GM12878 (cell line): ENCODE measurements at regions of chr17 and their contacts with region 1.

Region 1: DNA sequence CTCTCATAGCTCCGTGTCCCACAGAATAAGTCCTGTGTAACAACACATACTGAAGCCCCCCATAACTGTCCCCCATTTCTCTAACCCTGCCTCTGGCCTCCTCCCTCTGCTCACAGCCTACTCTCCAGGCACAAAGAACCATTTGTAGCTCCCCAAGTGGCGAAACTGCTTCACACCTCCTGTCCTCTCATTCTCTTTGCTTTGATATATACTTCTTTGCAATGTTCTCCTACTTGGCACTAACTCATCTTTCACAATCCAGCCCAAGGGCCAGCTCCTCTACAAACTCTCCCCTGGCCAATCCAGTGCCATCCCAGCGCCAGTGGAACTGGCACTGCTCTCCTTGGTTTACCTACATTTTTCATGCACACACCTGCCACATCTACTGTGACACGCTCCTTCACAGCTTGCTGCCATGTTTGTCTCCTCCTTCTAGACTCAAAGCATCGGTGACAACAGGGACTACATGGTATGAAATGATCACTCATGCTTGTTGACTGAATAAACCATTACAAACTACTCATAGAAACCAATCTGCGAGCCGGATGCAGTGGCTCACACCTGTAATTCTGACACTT is 12.8 kb downstream of the CYTH1 start:
- DNase-seq: no peak
- ATAC-seq: peak; percentile 54
- H3K4me3 ChIP-seq: no peak overlapping the region
- H3K27ac ChIP-seq: peak overlapping the region; percentile 53
- H3K4me1 ChIP-seq: peaks cover 66% of the 10 kb centered on the region
- H3K27me3 ChIP-seq: no peaks in the 10 kb centered on the region
- CTCF ChIP-seq: peak; percentile 36 to 45 (median 45)
- EP300 ChIP-seq: no peak
- POLR2A ChIP-seq: peak; percentile 54; the same call in 1 of the 2 replicates
- RAD21 ChIP-seq: 0 out of 2 replicates have a peak, but pooled peaks have one; percentile 20

Region 2: GRCh38 chr17:78723001-78723796 is 46.1 kb before region 1 on chr17:
- CTCF ChIA-PET with region 1: interaction called, 7 read pairs
- POLR2A ChIA-PET with region 1: interaction called, 10 read pairs
- RAD21 ChIA-PET with region 1: interaction called, 5 read pairs
- SMC1A ChIA-PET with region 1: interaction called, 10 read pairs
- in situ Hi-C with region 1: no loop called
- intact Hi-C with region 1: no loop called
- DNase-seq: no peak
- ATAC-seq: no peak
- H3K4me3 ChIP-seq: peak overlapping the region; percentile 56
- H3K27ac ChIP-seq: peak overlapping the region; percentile 74
- H3K4me1 ChIP-seq: peaks cover 90% of the 10 kb centered on the region
- H3K27me3 ChIP-seq: no peaks in the 10 kb centered on the region
- CTCF ChIP-seq: no peak
- EP300 ChIP-seq: no peak
- POLR2A ChIP-seq: peak; percentile 30; the same call in 1 of the 2 replicates
- RAD21 ChIP-seq: no peak

Region 3: GRCh38 chr17:78729641-78730040 is 39.6 kb before region 1 on chr17:
- CTCF ChIA-PET with region 1: interaction called, 76 read pairs
- POLR2A ChIA-PET with region 1: interaction called, 131 read pairs
- RAD21 ChIA-PET with region 1: interaction called, 32 read pairs
- SMC1A ChIA-PET with region 1: interaction called, 10 read pairs
- in situ Hi-C with region 1: no loop called
- intact Hi-C with region 1: no loop called
- DNase-seq: no peak
- ATAC-seq: 0 out of 3 replicates have a peak, but pooled peaks have one; percentile 4
- H3K4me3 ChIP-seq: peak overlapping the region; percentile 67
- H3K27ac ChIP-seq: peak overlapping the region; percentile 74
- H3K4me1 ChIP-seq: peaks cover 55% of the 10 kb centered on the region
- H3K27me3 ChIP-seq: no peaks in the 10 kb centered on the region
- CTCF ChIP-seq: no peak
- EP300 ChIP-seq: no peak
- POLR2A ChIP-seq: no peak
- RAD21 ChIP-seq: no peak

Region 4: DNA sequence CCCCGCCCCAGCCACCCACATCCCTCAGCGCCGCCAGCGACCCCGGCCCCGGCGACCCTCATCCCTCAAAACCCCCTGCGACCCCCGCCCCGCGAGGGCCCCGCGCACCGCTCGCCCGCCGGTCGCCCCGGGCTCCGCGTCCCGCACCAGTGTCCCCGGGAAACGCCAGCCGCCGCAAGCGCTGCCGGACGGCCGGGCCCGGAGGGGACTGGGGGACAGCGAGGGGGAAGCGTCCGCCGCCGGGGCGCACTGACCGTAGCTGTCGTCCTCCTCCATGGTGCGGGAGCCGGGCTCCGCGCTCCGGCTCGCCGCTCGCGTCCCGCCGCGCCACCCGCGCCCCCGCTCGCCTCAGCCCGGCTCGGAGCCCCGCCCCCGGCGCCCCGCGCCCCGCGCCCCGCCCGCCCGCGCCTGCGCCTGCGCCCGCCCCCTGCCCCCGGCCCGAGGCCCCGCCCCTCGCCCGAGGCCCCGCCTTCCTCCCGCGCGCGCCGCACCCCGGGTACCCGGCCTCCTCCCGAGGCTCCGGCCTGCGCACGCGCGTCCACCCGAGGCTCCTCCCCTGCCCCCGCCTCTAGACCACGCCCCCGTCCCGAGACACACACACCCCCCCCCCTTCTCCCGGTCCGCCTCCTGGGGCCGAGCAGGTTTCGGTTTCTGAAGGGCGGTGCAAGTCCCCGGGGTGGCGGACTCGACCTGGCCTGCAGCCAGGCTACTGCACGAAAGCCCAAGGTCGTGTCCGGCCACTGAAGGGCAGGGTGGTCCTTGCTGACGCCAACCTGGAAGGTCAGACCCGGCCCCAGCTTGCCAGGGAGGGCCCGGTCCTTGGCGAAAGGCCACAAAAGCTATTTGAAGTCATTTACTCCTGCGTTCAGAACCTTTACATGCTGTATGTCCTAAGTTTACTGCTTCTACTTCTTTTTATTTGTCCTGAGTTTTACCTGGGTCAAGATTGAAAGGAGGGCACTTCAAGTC is 12.9 kb after region 1 on chr17 and contains the start of gene CYTH1:
- CTCF ChIA-PET with region 1: interaction called, 6 read pairs
- POLR2A ChIA-PET with region 1: interaction called, 10 read pairs
- RAD21 ChIA-PET with region 1: interaction called, 10 read pairs
- SMC1A ChIA-PET with region 1: interaction called, 5 read pairs
- in situ Hi-C with region 1: no loop called
- intact Hi-C with region 1: no loop called
- DNase-seq: no peak
- ATAC-seq: peak; percentile 54
- H3K4me3 ChIP-seq: peak within 1 kb of the TSS; percentile 89
- H3K27ac ChIP-seq: peak within 1 kb of the TSS; percentile 97
- H3K4me1 ChIP-seq: peaks cover 6% of the 10 kb centered on the region; the same call in 1 of the 2 replicates
- H3K27me3 ChIP-seq: no peaks in the 10 kb centered on the region
- CTCF ChIP-seq: no peak
- EP300 ChIP-seq: no peak
- POLR2A ChIP-seq: peak; percentile 85
- RAD21 ChIP-seq: 0 out of 2 replicates have a peak, but pooled peaks have one; percentile 1
- polyA plus RNA-seq, gene CYTH1: 6.6 to 11.8 TPM